BJ (cell line): ENCODE measurements at regions of chr3 and their contacts with region 1.

Region 1: DNA sequence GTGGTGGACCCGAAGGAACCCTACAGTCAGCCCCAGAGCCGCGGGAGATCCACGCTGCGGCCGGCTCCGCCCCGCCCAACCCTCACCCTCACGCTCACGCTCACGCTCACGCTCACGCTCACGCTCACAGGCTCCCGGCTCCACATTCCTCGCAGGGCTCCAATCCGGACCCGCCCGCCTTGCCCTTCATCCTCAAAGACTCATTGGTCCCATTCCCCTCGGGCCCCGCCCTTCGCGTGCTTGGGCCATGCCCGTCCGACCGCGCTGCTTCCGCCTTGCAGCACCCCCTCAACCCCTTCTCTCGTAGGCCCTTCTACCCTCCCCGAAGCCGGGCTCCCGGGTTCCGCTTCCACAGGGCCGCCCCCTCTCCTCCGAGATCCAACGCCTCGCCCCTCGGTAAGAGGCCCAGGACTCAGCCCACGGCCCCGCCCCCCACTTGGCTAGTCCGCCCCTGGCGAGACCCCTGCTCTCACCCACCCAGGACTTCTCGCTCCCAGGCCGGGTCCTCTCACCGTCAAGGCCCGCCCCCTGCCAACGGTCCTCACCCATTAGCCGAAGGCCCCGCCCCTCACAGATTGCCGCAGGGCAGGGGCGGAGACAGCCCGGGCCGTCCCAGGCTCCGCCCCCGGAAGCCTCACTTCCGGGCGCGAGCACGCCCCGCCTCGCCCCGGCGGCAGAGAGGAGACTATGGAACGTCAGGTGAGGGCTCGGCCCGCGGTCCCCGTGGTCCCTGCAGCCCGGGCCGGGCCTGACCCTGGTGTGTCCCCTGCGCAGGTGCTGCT is at the start of gene APEH:
- DNase-seq: peak; percentile 86
- H3K4me3 ChIP-seq: peak within 1 kb of the TSS; percentile 79
- H3K27me3 ChIP-seq: no peaks in the 10 kb centered on the region
- CTCF ChIP-seq: no peak
- polyA plus RNA-seq, gene APEH: 105 and 165 TPM in 2 replicates

Region 2: GRCh38 chr3:49553692-49554632 is 119.9 kb before region 1 on chr3 and contains the start of gene BSN:
- CTCF ChIA-PET with region 1: interaction called, 10 read pairs
- POLR2A ChIA-PET with region 1: no interaction called
- DNase-seq: peak; percentile 30
- H3K4me3 ChIP-seq: peak within 1 kb of the TSS; percentile 64
- H3K27me3 ChIP-seq: peaks cover 11% of the 10 kb centered on the region
- CTCF ChIP-seq: no peak
- polyA plus RNA-seq, gene BSN: 0.01 and 0.04 TPM in 2 replicates

Region 3: GRCh38 chr3:49566312-49566711 is 107.6 kb before region 1 on chr3:
- CTCF ChIA-PET with region 1: interaction called, 15 read pairs
- POLR2A ChIA-PET with region 1: no interaction called
- DNase-seq: no peak
- H3K4me3 ChIP-seq: no peak overlapping the region
- H3K27me3 ChIP-seq: peaks cover 6% of the 10 kb centered on the region
- CTCF ChIP-seq: peak; percentile 34